ENCODE measurements at regions of chr17 and their contacts with region 1.

Region 1: DNA sequence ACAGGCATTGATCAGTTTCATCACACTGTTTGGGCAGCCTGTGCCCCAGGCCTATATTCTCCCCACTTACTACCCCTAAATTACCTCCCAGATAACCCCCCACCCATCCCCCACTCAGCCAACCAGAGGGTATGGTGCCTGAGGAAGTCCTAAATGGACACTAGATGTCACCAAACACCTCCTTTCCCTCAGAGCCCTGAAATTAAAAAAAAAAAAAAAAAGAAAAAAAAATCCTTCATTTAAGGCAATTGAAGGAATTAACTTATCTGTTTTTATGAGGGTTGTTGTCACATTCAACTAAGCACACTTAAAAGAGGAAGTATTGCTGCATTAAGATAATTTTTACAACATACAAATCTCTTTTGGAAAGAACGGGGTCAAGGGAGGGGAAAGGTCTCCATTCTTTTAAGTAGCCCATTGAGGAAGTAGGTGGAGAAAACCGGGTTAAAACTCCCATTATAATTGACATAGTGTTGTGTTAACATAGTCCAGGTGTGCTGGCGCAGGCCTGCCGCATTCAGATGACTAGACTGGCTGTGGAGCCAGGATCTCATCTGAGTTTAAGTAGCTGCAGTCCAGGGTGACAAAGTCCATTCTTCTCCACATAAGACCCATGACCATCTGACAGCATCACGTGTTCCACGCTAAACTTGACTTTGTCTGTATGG is 46.3 kb downstream of the SNX11 start:
- DNase-seq: peak; percentile 80 to 88
- H3K4me3 ChIP-seq: no peak overlapping the region
- H3K4me3 Mint-ChIP-seq: peak overlapping the region; percentile 28
- H3K27ac Mint-ChIP-seq: no peak overlapping the region
- H3K4me1 ChIP-seq: peaks cover 10% of the 10 kb centered on the region
- H3K4me1 Mint-ChIP-seq: peaks cover 14% of the 10 kb centered on the region
- H3K27me3 ChIP-seq: peaks cover 2% of the 10 kb centered on the region; the same call in 1 of the 2 replicates
- H3K27me3 Mint-ChIP-seq: peaks cover 15% of the 10 kb centered on the region
- CTCF ChIP-seq: peak; percentile 88 to 93

Region 2: DNA sequence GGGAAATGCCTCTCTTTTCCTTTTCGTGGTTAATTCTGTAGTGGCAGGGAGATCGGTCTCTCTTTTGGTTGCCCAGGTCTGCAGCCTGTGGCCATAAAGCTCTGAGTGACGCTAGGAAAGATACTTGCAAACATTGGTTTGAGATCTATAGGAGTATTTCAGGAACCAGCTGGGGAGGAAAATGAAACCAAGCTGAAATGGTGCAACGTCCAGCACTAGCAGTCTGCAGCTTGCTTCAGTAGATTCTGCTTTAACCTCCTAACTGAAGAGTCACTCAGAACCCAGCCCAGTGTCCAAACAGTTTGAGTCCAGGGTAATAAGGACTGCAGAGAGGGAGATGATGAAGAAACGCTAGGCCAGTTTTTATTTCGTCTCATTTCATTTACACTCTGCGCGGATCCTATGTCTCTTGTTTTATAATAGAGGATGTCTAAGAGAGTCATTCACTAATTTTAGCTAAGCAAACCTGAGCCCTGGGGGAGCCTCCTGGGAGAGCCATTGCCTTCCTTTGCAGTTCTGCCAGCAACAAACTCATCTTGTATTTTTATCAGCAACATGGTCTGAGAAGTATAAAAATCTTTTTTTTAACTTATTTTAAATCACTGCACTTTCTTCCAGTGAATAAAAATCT is 245.8 kb before region 1 on chr17:
- CTCF ChIA-PET with region 1: no interaction called
- POLR2A ChIA-PET with region 1: no interaction called
- intact Hi-C with region 1: no loop called
- DNase-seq: no peak
- H3K4me3 ChIP-seq: no peak overlapping the region
- H3K4me3 Mint-ChIP-seq: no peak overlapping the region
- H3K27ac Mint-ChIP-seq: no peak overlapping the region
- H3K4me1 ChIP-seq: no peaks in the 10 kb centered on the region
- H3K4me1 Mint-ChIP-seq: no peaks in the 10 kb centered on the region
- H3K27me3 ChIP-seq: no peaks in the 10 kb centered on the region
- H3K27me3 Mint-ChIP-seq: no peaks in the 10 kb centered on the region
- CTCF ChIP-seq: no peak

Region 3: GRCh38 chr17:48011405-48012150 is 142.2 kb before region 1 on chr17:
- CTCF ChIA-PET with region 1: no interaction called
- POLR2A ChIA-PET with region 1: no interaction called
- intact Hi-C with region 1: no loop called
- DNase-seq: peak; percentile 83
- H3K4me3 ChIP-seq: peak overlapping the region; percentile 48
- H3K4me3 Mint-ChIP-seq: peak overlapping the region; percentile 70
- H3K27ac Mint-ChIP-seq: no peak overlapping the region
- H3K4me1 ChIP-seq: peaks cover 5% of the 10 kb centered on the region
- H3K4me1 Mint-ChIP-seq: peaks cover 6% of the 10 kb centered on the region
- H3K27me3 ChIP-seq: no peaks in the 10 kb centered on the region
- H3K27me3 Mint-ChIP-seq: peaks cover 4% of the 10 kb centered on the region
- CTCF ChIP-seq: peak; percentile 95 to 97

Region 4: DNA sequence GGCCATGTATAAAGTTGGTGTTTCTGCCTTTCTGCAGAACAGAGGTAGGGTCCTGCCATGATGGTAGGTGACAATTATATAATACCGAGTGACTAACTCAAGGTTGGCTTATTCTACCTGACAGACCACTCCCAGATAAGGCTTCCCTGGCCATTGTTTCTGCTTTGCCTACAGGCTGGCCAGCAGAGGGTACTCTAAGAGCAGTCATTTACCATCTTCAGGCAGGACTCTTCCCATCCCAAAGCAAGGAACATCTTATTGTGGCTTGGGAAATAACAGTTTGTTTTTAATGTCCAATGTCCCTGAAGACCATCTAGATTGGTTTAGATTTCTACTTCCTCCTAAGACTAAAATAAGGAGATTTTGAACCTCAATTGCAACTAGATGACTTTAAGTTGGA is 27.8 kb after region 1 on chr17:
- CTCF ChIA-PET with region 1: interaction called, 3 read pairs
- POLR2A ChIA-PET with region 1: no interaction called
- intact Hi-C with region 1: loop called (anchors 2 kb)
- DNase-seq: peak; percentile 67 to 76
- H3K4me3 ChIP-seq: no peak overlapping the region
- H3K4me3 Mint-ChIP-seq: no peak overlapping the region
- H3K27ac Mint-ChIP-seq: no peak overlapping the region
- H3K4me1 ChIP-seq: no peaks in the 10 kb centered on the region
- H3K4me1 Mint-ChIP-seq: no peaks in the 10 kb centered on the region
- H3K27me3 ChIP-seq: 0 out of 2 replicates have a peak, but pooled peaks cover 2% of the 10 kb centered on the region
- H3K27me3 Mint-ChIP-seq: peaks cover 18% of the 10 kb centered on the region
- CTCF ChIP-seq: peak; percentile 77 to 95

Region 5: GRCh38 chr17:48194097-48194550 is 40.3 kb after region 1 on chr17:
- CTCF ChIA-PET with region 1: no interaction called
- POLR2A ChIA-PET with region 1: no interaction called
- intact Hi-C with region 1: no loop called
- DNase-seq: peak in 1 of 2 experiments; percentile 30
- H3K4me3 ChIP-seq: no peak overlapping the region
- H3K4me3 Mint-ChIP-seq: no peak overlapping the region
- H3K27ac Mint-ChIP-seq: peak overlapping the region; percentile 25
- H3K4me1 ChIP-seq: peaks cover 25% of the 10 kb centered on the region
- H3K4me1 Mint-ChIP-seq: peaks cover 25% of the 10 kb centered on the region
- H3K27me3 ChIP-seq: no peaks in the 10 kb centered on the region
- H3K27me3 Mint-ChIP-seq: no peaks in the 10 kb centered on the region
- CTCF ChIP-seq: no peak

Region 6: DNA sequence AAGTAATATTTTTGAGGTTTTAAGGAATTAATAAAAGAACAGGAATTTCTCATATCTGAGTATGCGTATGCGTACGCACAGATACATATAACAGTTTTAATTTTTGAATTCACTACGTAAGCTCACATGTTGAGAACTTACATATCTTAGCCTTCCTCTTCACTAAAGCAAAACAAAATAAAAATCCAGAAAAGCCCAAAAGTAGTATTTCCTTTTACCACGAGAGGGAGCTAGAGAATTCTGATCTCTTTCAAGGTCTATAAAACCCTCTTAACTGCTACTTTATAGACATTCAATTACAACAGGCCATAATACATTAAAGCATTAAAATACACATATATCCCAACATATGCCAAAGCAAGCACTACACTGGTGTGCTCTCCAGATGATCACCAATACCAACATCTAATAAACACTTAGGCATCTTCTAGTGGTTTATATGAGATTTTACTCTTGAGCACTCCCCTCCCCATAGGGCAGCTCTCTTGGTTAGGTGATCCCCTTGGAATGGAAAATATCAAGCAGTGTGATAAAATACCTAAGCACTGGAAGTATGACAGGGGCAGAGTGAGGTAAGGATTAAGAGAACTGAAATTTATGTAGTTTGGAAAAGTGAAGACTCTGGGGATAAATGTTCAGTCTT is 182.2 kb after region 1 on chr17:
- CTCF ChIA-PET with region 1: interaction called, 8 read pairs
- POLR2A ChIA-PET with region 1: no interaction called
- intact Hi-C with region 1: loop called (anchors 10 kb)
- DNase-seq: peak in 1 of 2 experiments; percentile 79
- H3K4me3 ChIP-seq: no peak overlapping the region
- H3K4me3 Mint-ChIP-seq: no peak overlapping the region
- H3K27ac Mint-ChIP-seq: no peak overlapping the region
- H3K4me1 ChIP-seq: no peaks in the 10 kb centered on the region
- H3K4me1 Mint-ChIP-seq: no peaks in the 10 kb centered on the region
- H3K27me3 ChIP-seq: no peaks in the 10 kb centered on the region; the same call in 1 of the 2 replicates
- H3K27me3 Mint-ChIP-seq: peaks cover 18% of the 10 kb centered on the region
- CTCF ChIP-seq: peak; percentile 90 to 96